Gastrocnemius medialis (tissue), 4 donors: ENCODE measurements at regions of chr20 and their contacts with region 1.

Region 1: DNA sequence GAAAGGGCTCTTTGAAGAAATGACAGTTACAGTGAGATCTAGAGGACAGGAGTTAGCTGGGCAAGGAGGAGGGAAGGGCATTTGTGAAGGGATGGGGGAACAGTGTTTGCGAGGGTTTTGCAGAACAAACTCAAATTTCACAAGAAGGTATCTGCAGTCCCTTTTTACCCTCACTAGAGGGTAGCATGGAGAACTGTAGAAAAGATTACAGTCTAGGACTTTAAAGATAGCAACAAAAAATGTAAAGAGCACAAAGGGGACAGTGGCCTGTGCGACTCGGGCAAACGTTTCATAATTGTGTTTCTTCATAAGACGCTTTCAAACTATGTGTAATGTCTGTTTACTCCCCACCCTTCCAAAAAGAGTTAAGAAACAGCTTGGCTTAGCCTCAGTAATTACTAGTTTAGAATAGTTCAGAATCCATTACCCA is 21.2 kb upstream of the ASXL1 start:
- DNase-seq: no peak
- ATAC-seq: peak in 1 of 2 donors; percentile 33
- H3K4me3 ChIP-seq: no peak overlapping the region
- H3K27ac ChIP-seq: no peak overlapping the region
- H3K4me1 ChIP-seq: peaks cover 0 to 13% of the 10 kb centered on the region in 2 donors
- H3K27me3 ChIP-seq: no peaks in the 10 kb centered on the region
- CTCF ChIP-seq: peak in 4 of 5 experiments; percentile 12 to 53 (median 39)
- POLR2A ChIP-seq: no peak

Region 2: DNA sequence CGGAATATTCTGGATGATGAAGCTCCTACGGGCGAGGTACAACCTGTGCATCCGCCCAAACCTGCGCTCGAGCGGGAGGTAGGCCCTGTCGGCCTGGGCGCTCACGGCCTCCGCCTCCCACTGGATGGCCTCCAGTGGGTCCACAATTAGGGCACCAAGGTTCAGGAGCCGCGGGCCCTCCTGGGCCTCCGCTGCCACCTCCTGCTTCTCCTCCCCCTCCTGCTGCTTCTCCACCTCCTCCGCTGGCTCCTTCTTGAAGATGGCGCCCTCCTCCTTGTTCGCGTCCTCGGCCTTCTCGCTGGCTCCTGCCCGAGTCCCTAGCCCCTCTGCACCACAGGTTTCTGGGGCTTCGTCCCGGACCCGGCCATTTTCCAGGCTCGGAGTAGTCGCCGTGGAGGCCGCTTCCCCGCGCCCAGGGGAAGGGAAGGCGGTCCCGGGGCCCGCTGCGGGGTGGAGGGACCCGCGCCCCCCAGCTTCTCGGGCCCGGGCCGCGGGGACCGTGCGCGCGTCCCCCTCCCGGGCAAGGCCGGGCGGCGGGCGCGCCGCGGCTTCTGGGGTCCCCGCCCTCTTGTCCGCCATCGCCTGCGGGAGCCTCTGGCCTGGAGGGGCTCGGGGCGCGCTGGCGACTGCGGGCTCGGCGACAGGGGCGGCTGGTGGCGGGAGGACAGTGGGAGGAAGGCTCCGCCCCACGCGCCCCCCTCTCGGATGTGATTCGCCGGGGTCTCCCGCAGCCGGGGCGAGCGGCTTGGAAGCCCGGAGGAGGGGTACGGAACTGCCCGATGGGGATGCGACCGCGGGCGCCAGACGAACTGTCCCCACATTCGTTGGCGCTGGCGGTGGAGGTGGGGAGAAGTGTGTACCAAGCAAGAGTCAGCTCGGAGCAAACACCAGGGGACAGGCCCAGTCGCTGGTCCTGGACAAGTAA is 147.0 kb before region 1 on chr20:
- in situ Hi-C with region 1: no loop called
- intact Hi-C with region 1: no loop called
- DNase-seq: no peak
- ATAC-seq: peak; percentile 38 to 63
- H3K4me3 ChIP-seq: peak overlapping the region; percentile 60 to 75 (median 64)
- H3K27ac ChIP-seq: peak overlapping the region; percentile 52 to 69 (median 58)
- H3K4me1 ChIP-seq: peaks cover 13 to 51% of the 10 kb centered on the region in 2 donors
- H3K27me3 ChIP-seq: no peaks in the 10 kb centered on the region
- CTCF ChIP-seq: no peak
- POLR2A ChIP-seq: peak; percentile 3 to 11

Region 3: GRCh38 chr20:32456869-32457478 is 120.0 kb after region 1 on chr20:
- in situ Hi-C with region 1: no loop called
- intact Hi-C with region 1: loop called (anchors 2 kb)
- DNase-seq: no peak
- ATAC-seq: peak; percentile 40 to 57
- H3K4me3 ChIP-seq: peak overlapping the region; percentile 46 to 55 (median 53)
- H3K27ac ChIP-seq: no peak overlapping the region
- H3K4me1 ChIP-seq: peaks cover 4 to 13% of the 10 kb centered on the region in 2 donors
- H3K27me3 ChIP-seq: no peaks in the 10 kb centered on the region
- CTCF ChIP-seq: peak; percentile 66 to 82 (median 68)
- POLR2A ChIP-seq: no peak

Region 4: DNA sequence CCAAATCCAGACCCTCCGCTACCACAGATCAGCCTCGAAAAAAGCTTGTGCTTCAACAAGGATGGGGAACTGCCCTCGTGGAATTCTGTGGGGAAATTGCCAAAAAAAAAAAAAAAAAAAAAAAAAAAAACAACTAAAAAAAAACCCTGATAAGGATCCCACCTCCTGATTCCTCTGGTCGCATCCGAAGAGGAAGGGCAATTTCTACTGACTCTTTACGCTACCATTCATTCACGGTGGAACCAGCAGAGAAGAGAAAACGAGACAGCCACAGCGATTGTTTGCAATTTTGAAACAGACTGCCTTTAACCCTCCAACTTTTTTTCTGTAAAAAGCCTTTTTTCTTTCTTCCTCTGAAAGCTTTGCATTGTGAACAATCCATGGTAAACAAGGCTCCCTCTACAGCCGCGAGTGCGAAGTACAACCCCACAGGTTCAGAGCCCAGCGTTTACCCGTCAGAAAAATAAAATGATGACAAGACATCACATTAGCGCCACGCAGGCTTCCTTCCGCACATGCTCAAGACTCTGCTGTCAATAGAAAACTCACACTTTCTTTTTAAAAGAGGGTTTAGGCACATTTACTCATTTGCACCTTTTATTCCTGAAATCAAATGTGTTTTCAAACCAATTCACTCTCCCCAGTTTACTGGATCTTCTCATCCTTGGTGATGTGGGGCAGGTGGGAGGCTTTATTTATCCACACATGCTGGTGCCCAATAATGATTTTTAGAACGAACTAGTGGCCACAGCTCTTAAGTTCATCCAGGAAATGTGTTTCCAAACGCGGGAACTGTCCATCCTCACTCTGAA is 148.2 kb after region 1 on chr20:
- in situ Hi-C with region 1: no loop called
- intact Hi-C with region 1: loop called (anchors 5 kb)
- DNase-seq: peak in 1 of 2 donors; percentile 57
- ATAC-seq: peak; percentile 63 to 80
- H3K4me3 ChIP-seq: peak overlapping the region; percentile 59 to 80 (median 74)
- H3K27ac ChIP-seq: peak overlapping the region in 3 of 4 donors; percentile 54 to 72 (median 68)
- H3K4me1 ChIP-seq: peaks cover 5 to 17% of the 10 kb centered on the region in 2 donors
- H3K27me3 ChIP-seq: no peaks in the 10 kb centered on the region
- CTCF ChIP-seq: peak; percentile 45 to 83 (median 60)
- POLR2A ChIP-seq: no peak

Region 5: GRCh38 chr20:33638726-33639125 is 1301.8 kb after region 1 on chr20:
- in situ Hi-C with region 1: no loop called
- intact Hi-C with region 1: no loop called
- DNase-seq: no peak
- ATAC-seq: no peak
- H3K4me3 ChIP-seq: no peak overlapping the region
- H3K27ac ChIP-seq: no peak overlapping the region
- H3K4me1 ChIP-seq: peaks cover 0 to 4% of the 10 kb centered on the region in 2 donors
- H3K27me3 ChIP-seq: no peaks in the 10 kb centered on the region
- CTCF ChIP-seq: no peak
- POLR2A ChIP-seq: no peak